Activated CD8-positive, alpha-beta memory T cell treated with anti-CD3 and anti-CD28 coated beads, Interleukin-2, amount 10 ng/mL, durations not matched to agents 7 days and 5 days (primary cell): ENCODE measurements at regions of chr17 and their contacts with region 1.

Region 1: DNA sequence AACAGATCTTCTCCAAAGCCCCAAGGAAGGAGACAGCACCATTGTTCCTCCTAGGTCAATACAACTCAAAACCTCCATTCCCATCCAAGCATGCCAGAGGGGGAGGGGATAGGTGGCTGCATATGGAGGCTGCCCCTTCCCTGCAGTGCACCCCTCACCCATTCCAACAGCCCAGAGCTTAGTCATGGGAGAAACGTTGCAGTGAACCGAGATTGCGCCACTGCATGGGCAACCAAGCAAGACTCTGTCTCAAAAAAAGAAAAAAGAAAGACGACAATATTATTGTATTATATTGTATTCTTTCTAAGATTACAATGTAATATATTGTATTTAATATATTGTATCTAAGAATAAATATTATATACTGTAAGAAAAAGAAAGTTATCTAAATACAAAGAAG is 36.4 kb upstream of the CD300E start:
- DNase-seq: no peak
- ATAC-seq: no peak
- H3K4me3 Mint-ChIP-seq: no peak overlapping the region
- H3K27ac Mint-ChIP-seq: no peak overlapping the region
- H3K4me1 Mint-ChIP-seq: peaks cover 7% of the 10 kb centered on the region
- H3K27me3 Mint-ChIP-seq: peaks cover 62% of the 10 kb centered on the region

Region 2: DNA sequence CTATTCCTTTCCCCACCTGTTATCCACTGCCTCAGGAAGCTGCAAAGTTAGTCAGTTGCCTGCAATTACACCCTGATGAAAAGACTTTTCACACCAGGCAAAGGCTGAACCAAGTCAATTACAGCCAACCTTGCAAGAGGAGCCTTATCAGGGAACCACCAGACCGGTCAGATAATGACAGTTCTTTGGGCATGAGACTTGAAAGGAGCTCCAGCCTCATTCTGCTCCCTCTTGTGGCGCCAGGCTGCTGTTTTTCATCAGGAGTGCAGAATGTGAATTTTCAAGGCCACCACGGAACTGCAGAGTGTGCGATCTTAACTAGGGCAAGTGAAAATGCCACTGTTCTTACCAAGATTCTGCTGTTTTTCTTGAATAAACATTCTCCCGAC is 363.4 kb before region 1 on chr17:
- CTCF ChIA-PET with region 1: no interaction called
- DNase-seq: peak; percentile 64
- ATAC-seq: no peak
- H3K4me3 Mint-ChIP-seq: no peak overlapping the region
- H3K27ac Mint-ChIP-seq: no peak overlapping the region
- H3K4me1 Mint-ChIP-seq: peaks cover 23% of the 10 kb centered on the region
- H3K27me3 Mint-ChIP-seq: peaks cover 3% of the 10 kb centered on the region

Region 3: DNA sequence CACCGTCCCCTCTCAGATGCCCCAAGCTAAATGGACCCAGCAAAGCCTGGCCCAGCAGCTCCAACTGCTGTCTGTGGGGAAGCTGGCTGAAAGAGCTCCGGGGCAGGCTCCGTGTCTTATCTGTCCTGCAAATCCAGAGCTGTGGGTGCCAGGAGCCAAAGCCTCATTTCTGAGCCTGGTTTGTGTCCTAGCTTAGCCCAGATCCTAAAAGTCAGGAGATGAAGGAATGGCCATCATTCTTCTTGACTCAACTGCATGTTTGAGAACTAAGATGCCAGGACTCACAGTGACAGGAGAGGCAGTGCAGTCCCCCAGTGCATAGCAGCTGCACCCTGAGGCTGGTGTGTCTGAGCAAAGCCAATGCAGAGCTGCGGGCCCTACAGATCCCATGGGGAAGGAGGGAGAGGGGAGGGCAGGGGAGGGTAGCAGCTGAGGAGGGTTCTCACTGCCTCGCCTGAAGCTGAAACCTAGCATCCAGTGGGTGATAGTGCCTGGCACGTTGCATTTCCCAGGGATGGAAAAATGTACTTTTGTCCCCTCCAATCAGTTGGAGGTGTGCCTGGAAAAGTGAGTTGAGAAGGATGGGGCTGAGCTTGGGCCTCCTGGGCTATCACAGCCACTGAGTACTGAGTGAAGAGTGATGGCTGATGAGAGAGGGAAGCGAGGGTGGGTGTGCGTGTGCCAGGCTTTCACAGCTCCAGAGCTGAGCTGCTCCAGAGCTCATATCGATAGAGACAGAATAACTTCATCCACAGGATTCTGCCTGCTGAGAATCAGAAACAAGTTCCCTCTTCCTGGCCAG is 11.8 kb before region 1 on chr17:
- CTCF ChIA-PET with region 1: interaction called, 10 read pairs
- DNase-seq: no peak
- ATAC-seq: no peak
- H3K4me3 Mint-ChIP-seq: no peak overlapping the region
- H3K27ac Mint-ChIP-seq: no peak overlapping the region
- H3K4me1 Mint-ChIP-seq: no peaks in the 10 kb centered on the region
- H3K27me3 Mint-ChIP-seq: peaks cover 83% of the 10 kb centered on the region

Region 4: GRCh38 chr17:74723891-74724290 is 64.0 kb after region 1 on chr17:
- CTCF ChIA-PET with region 1: interaction called, 16 read pairs
- DNase-seq: no peak
- ATAC-seq: no peak
- H3K4me3 Mint-ChIP-seq: no peak overlapping the region
- H3K27ac Mint-ChIP-seq: no peak overlapping the region
- H3K4me1 Mint-ChIP-seq: peaks cover 13% of the 10 kb centered on the region
- H3K27me3 Mint-ChIP-seq: peaks cover 39% of the 10 kb centered on the region

Region 5: GRCh38 chr17:74748529-74749365 is 88.8 kb after region 1 on chr17 and contains the start of gene NHERF1:
- CTCF ChIA-PET with region 1: interaction called, 42 read pairs
- DNase-seq: peak; percentile 96
- ATAC-seq: peak; percentile 87
- H3K4me3 Mint-ChIP-seq: peak within 1 kb of the TSS; percentile 100
- H3K27ac Mint-ChIP-seq: peak within 1 kb of the TSS; percentile 85
- H3K4me1 Mint-ChIP-seq: peaks cover 54% of the 10 kb centered on the region
- H3K27me3 Mint-ChIP-seq: no peaks in the 10 kb centered on the region
- total RNA-seq, gene NHERF1: 284 to 377 TPM

Region 6: GRCh38 chr17:74776044-74776977 is 116.4 kb after region 1 on chr17 and contains the start of gene NAT9:
- CTCF ChIA-PET with region 1: interaction called, 29 read pairs
- DNase-seq: peak; percentile 98
- ATAC-seq: peak; percentile 85
- H3K4me3 Mint-ChIP-seq: peak within 1 kb of the TSS; percentile 99
- H3K27ac Mint-ChIP-seq: peak within 1 kb of the TSS; percentile 86
- H3K4me1 Mint-ChIP-seq: peaks cover 62% of the 10 kb centered on the region
- H3K27me3 Mint-ChIP-seq: no peaks in the 10 kb centered on the region
- total RNA-seq, gene NAT9: 34.1 to 34.5 TPM